ENCODE measurements at regions of chr3 and their contacts with region 1.

Region 1: DNA sequence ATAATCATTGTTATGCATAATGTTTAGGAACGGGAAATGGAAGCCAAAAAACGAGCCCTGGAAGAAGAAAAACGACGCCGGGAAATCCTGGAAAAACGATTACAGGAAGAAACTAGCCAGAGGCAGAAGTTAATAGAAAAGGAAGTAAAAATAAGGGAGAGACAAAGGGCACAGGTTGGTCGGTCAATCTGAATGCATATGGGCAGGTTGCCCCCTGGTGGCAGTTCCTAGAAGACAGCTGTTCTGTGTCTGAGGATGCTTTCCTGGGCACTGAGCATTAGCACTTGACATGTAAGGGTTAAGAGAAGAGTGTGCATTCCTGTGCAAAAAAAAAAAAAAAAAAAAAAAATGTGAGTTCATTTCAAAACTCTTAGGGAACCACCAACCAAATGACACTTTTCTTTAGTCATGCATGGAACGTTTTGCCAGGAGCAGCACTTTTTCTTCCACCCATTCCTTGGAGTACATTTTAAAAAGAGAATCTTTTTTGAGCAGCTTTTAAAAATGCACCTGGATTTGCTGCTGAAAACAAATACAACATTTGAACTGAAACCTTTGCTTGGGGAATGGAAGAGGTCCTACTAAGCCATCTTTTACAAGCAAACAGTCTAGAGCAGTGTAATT is 11.1 kb upstream of the ABHD10 start:
- DNase-seq: peak; percentile 58 to 96 (median 84)

Region 2: GRCh38 chr3:111668912-111669488 is 298.8 kb before region 1 on chr3:
- intact Hi-C with region 1: loop called (anchors 5 kb)
- DNase-seq: no peak

Region 3: DNA sequence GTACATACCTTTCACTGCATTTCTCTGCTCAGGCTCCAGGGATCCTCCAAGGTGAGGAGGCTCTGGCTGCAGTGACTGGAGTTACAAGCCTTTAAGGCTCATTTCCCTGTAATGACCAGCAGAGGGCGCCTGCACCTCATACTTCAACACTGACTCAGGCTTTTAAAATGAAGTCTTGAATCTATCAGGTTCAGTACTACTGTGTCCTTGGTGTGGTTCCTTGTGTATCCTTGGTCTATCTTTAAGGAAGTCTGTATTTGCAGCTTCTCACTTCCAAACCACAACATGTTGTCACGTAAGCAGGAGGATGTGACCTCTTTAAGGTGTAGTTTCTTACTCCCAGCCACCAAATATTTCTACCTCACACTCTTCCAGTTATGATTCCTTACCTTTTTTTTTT is 250.2 kb before region 1 on chr3:
- intact Hi-C with region 1: loop called (anchors 1 kb)
- DNase-seq: peak; percentile 44 to 96 (median 71)

Region 4: DNA sequence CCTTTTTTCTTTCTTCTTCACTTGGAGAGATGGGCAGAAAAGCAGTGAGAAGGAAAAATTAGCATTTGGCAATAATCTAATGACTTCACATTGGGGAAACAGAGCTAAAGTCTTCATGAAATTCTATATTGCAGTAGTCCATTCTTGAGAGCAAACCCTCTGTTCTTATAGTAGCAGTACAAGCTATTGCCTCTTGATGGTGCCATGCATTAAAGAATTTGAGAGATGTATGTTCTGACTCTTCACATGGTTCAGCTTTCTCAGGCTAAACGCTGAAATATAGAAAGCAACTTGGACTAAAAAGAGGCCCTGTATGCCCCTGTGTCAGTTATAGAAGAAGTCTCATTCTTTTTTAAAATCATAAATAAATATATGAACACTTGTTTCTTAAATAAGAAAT is 72.7 kb before region 1 on chr3:
- intact Hi-C with region 1: loop called (anchors 2 kb)
- DNase-seq: no peak

Region 5: DNA sequence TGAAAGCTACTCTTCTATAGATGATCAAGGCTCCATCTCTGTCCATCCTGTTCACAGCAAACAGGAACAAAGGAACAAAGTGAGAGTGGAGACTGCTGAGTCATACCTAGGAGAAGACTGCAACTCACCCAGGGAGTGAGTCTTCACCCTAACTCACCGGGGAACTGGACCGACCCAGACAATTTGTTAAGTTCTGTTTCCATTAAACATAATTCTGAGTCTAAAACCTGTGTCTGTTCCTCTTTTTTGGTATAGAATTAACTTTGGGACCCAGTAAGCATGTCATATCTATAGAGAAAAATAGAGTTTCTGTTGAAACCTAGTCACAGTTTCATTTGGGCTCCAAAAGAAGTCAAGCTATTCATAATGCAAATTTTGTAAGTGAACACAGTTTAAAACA is 651.5 kb after region 1 on chr3:
- intact Hi-C with region 1: no loop called
- DNase-seq: no peak